WTC11 (cell line): ENCODE measurements at regions of chr14 and their contacts with region 1.

Region 1: DNA sequence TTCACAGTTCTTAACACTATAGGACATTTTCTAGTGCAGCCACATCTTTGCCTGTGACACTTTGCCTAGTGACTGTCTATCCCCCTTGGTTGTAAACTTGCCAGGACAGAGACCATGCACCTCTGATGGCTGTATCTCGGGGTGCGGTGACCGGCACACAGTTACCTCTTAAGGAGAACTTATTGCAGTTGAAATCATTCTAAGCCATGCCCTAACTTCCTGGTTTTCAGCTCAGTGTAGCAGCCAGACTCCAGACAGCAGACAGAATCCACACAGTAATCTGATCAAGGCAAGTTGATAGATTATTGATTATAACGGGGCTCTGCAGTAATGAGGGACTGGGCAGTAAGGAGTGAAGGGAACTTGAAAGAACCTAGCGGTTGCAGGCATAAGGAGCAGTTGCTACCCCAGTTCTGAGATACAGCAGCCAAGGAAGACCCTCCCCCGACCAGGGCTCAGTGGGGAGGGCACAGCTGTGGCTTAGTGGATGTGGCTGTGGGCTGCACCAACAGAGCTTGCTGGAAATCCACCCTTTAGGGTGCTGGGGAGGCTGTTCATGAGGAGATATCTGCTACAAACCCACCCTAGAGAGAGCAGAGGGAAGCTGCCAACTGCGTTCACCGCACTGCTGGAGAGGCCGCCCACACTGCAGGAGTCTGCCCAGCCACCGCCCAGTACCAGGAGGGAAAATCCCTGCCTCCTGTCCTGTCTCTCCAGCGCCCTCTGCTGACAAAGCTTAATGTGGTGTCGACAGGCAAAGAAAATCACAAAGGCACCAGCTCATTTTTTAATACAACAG is 58.2 kb upstream of the BEGAIN start:
- DNase-seq: peak; percentile 96
- ATAC-seq: peak; percentile 94
- H3K4me3 Mint-ChIP-seq: peak overlapping the region; percentile 50
- H3K27ac Mint-ChIP-seq: no peak overlapping the region
- H3K4me1 Mint-ChIP-seq: peaks cover 9% of the 10 kb centered on the region
- H3K27me3 Mint-ChIP-seq: peaks cover 6% of the 10 kb centered on the region
- CTCF ChIP-seq: peak; percentile 75

Region 2: GRCh38 chr14:100417466-100417865 is 227.9 kb before region 1 on chr14:
- CTCF ChIA-PET with region 1: interaction called, 65 read pairs
- POLR2A ChIA-PET with region 1: no interaction called
- DNase-seq: peak; percentile 79
- ATAC-seq: peak; percentile 98
- H3K4me3 Mint-ChIP-seq: no peak overlapping the region
- H3K27ac Mint-ChIP-seq: peak overlapping the region; percentile 70; the same call in 1 of the 2 replicates
- H3K4me1 Mint-ChIP-seq: peaks cover 13% of the 10 kb centered on the region
- H3K27me3 Mint-ChIP-seq: no peaks in the 10 kb centered on the region
- CTCF ChIP-seq: peak; percentile 59

Region 3: DNA sequence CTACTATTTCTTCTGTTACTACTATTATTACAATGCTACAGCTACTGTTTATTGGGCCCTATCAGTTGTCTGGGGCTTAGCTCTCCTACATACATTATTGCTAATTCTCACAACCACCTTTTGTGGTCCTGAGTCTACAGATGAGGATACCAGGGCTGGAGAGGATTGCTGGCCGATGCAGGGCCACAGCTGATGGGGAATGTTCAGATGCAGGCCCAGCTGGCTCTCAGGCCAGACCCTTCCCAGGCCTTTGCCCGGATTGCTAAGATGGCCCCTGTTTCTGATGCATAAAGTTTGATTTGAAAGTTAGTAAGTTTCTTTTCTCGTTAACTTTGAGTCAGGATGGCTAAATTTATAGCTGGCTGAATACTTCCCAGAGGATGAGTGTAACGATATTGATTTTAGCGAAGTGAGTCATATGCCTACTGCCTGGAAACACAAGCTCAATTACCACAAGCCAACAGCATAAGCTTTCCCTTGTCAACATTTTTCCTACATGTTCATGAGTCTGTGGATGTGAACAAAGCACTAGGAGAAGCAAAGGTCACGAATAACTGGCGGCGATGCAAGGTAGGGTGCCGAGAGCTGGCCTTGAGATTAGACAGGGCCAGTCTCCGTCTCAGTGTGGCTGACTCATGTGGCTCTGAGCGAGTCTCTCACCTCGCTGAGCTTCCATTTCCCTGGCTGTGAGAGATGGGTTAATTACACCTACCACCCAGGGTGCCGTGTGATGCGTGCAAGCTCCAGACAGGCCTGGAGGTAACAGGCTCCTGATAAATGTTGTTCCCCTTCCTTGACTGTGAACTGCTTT is 169.2 kb before region 1 on chr14:
- CTCF ChIA-PET with region 1: interaction called, 11 read pairs
- POLR2A ChIA-PET with region 1: no interaction called
- DNase-seq: no peak
- ATAC-seq: no peak; the same call in 1 of the 2 replicates
- H3K4me3 Mint-ChIP-seq: no peak overlapping the region
- H3K27ac Mint-ChIP-seq: peak overlapping the region; percentile 48; the same call in 1 of the 2 replicates
- H3K4me1 Mint-ChIP-seq: no peaks in the 10 kb centered on the region
- H3K27me3 Mint-ChIP-seq: no peaks in the 10 kb centered on the region
- CTCF ChIP-seq: no peak

Region 4: DNA sequence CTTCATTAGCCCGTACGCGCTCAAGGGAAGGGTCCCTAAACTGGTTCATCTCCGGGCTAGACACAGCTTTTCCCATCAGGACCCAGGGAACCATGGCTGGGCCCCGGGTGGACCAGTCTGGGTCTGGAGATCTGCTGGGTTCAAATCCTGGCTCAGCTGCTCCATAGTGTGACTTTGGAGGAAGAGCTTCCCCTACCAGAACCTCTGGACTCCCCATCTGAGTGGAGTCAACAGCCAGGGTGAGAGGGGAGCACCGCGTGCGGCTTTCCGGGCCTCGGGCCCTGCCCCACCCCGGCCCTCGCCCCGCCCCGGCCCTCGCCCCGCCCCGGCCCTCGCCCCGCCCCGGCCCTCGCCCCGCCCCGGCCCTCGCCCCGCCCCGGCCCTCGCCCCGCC is 99.3 kb before region 1 on chr14:
- CTCF ChIA-PET with region 1: interaction called, 56 read pairs
- POLR2A ChIA-PET with region 1: no interaction called
- DNase-seq: no peak
- ATAC-seq: peak; percentile 16
- H3K4me3 Mint-ChIP-seq: peak overlapping the region; percentile 48
- H3K27ac Mint-ChIP-seq: no peak overlapping the region
- H3K4me1 Mint-ChIP-seq: peaks cover 12% of the 10 kb centered on the region
- H3K27me3 Mint-ChIP-seq: peaks cover 11% of the 10 kb centered on the region
- CTCF ChIP-seq: no peak

Region 5: GRCh38 chr14:100605706-100606686 is 39.4 kb before region 1 on chr14:
- CTCF ChIA-PET with region 1: interaction called, 14 read pairs
- POLR2A ChIA-PET with region 1: no interaction called
- DNase-seq: no peak
- ATAC-seq: no peak; the same call in 1 of the 2 replicates
- H3K4me3 Mint-ChIP-seq: no peak overlapping the region
- H3K27ac Mint-ChIP-seq: no peak overlapping the region
- H3K4me1 Mint-ChIP-seq: no peaks in the 10 kb centered on the region
- H3K27me3 Mint-ChIP-seq: peaks cover 8% of the 10 kb centered on the region
- CTCF ChIP-seq: no peak

Region 6: DNA sequence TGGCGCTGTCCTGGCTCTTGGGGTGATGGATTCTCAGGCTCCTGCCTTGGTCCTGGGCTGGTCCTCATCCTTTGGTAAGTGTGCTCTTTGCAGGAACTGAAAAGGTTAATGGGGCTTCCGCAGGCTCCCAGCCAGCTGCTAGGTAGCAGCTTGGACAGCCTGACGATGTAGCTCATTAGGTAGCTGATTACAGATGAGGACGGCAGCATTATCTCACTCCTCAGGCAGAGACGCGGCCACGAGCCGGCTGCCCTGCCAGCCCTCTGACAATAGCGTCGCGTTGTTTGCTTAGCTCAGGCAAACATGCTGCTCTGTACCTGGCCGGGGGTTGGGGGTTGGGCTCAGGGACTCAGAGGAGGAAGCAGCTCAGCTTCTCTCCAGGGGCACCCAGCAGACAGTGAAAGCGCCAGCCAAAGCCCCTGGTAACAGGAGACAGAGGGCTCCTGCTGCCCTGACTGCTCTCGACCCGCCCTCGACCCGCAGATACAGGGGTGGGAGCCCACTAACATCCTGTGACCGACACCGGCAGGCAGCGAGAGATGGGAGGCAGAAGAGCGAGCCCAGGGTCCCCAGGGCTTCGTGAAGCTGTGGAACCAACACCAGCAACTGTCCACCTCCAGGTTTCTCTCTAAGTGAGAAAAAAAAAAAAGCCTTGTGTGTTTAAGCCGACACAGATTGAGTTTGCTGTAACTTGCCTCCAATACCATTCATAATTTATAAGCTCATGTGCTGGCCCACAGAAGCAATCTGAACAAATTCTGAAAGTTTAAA is 27.8 kb after region 1 on chr14:
- CTCF ChIA-PET with region 1: interaction called, 11 read pairs
- POLR2A ChIA-PET with region 1: no interaction called
- DNase-seq: peak; percentile 62
- ATAC-seq: peak; percentile 87
- H3K4me3 Mint-ChIP-seq: peak overlapping the region; percentile 38
- H3K27ac Mint-ChIP-seq: no peak overlapping the region
- H3K4me1 Mint-ChIP-seq: peaks cover 26% of the 10 kb centered on the region
- H3K27me3 Mint-ChIP-seq: peaks cover 24% of the 10 kb centered on the region
- CTCF ChIP-seq: no peak

Region 7: GRCh38 chr14:100703386-100704257 is 58.2 kb after region 1 on chr14:
- CTCF ChIA-PET with region 1: no interaction called
- POLR2A ChIA-PET with region 1: no interaction called
- DNase-seq: no peak
- ATAC-seq: no peak
- H3K4me3 Mint-ChIP-seq: no peak overlapping the region
- H3K27ac Mint-ChIP-seq: no peak overlapping the region
- H3K4me1 Mint-ChIP-seq: peaks cover 6% of the 10 kb centered on the region
- H3K27me3 Mint-ChIP-seq: peaks cover 3% of the 10 kb centered on the region; the same call in 1 of the 2 replicates
- CTCF ChIP-seq: no peak